Activated CD8-positive, alpha-beta T cell treated with anti-CD3 and anti-CD28 coated beads for 36 hours (primary cell): ENCODE measurements at regions of chr3 and their contacts with region 1.

Region 1: GRCh38 chr3:98657457-98657856 is 64.0 kb upstream of the CPOX start:
- DNase-seq: peak; percentile 65
- ATAC-seq: peak; percentile 74
- H3K4me3 Mint-ChIP-seq: no peak overlapping the region
- H3K27ac Mint-ChIP-seq: no peak overlapping the region
- H3K4me1 Mint-ChIP-seq: no peaks in the 10 kb centered on the region
- H3K27me3 Mint-ChIP-seq: peaks cover 15% of the 10 kb centered on the region
- CTCF ChIP-seq: no peak

Region 2: DNA sequence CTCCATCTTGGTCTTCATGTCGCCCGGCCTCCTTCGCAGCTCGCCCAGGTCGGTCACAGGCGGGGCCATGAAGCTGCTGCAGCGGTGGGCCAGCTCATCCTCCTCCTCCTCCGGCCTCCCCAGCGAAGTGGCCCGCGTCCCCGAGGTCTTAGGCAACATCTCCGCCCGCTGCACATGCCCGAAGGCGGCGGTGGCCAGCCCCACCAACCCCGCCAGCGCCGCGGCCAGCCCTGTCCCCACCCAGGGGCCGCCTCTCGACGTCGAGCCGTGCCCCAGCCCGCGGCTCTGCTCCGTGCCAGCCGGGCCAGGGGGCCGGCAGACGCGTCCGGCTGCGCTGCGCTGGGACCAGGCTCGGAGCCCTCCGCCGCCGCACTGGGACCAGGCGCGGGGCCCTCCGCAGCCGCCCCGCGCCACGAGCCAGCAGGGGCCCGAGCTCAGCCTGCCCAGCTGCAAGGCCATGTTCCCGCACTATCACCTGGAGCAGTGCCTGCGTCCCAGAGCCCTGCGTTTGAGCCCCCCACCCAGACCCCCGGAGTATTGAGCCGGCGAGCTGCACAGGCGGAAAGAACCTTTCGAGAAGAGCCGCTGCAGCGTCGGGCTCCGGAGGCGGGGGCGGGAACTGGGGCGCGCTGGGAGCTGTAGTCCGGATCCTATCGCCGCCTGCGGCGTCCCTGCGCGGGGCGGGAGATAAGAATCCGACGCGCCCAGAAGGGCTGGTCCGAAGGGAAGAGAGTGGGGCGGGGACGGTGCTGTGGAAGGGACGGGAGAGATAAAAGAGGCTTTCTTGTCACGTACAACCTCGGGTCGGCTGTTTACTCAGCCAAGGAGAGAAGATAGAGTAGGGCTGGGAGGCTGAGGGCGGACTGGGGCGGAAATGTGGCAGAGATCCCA is 64.2 kb before region 1 on chr3 and contains the start of gene CPOX:
- CTCF ChIA-PET with region 1: interaction called, 23 read pairs
- POLR2A ChIA-PET with region 1: no interaction called
- intact Hi-C with region 1: no loop called
- DNase-seq: peak; percentile 94
- ATAC-seq: peak; percentile 99
- H3K4me3 Mint-ChIP-seq: peak within 1 kb of the TSS; percentile 96
- H3K27ac Mint-ChIP-seq: peak within 1 kb of the TSS; percentile 96
- H3K4me1 Mint-ChIP-seq: peaks cover 41% of the 10 kb centered on the region
- H3K27me3 Mint-ChIP-seq: no peaks in the 10 kb centered on the region
- CTCF ChIP-seq: no peak
- total RNA-seq, gene CPOX: 40.5 to 45.3 TPM